A549 (cell line): ENCODE measurements at regions of chr11 and their contacts with region 1.

Region 1: DNA sequence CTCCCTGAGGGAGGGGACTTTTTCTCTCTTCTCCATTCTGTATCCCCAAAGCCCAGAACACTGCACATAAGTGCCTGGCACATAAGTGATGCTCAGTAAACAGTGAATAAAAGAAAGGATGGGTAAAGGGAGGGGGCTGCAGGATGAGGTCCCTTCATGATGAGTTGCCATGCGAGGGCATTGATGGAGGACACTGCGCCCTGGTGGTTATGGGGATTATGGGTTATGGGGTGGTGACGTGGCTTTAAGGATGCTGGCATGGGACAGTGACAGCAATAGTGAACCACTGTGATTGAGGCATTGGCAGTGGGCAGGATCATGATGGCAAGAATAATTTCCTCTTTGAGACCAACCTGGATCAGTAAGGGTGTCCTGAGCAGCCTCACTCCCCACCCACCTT is 44.0 kb upstream of the LRRC32 start:
- DNase-seq: no peak
- ATAC-seq: peak in 1 of 2 experiments; percentile 46; a peak in 3 of 6 replicates
- H3K4me3 ChIP-seq: no peak overlapping the region
- H3K27ac ChIP-seq: no peak overlapping the region
- H3K4me1 ChIP-seq: no peaks in the 10 kb centered on the region
- CTCF ChIP-seq: no peak
- EP300 ChIP-seq: no peak
- POLR2A ChIP-seq: no peak
- RAD21 ChIP-seq: no peak

Region 2: GRCh38 chr11:76690736-76691135 is 23.8 kb before region 1 on chr11:
- CTCF ChIA-PET with region 1: no interaction called
- POLR2A ChIA-PET with region 1: no interaction called
- DNase-seq: no peak
- ATAC-seq: no peak
- H3K4me3 ChIP-seq: no peak overlapping the region
- H3K27ac ChIP-seq: no peak overlapping the region
- H3K4me1 ChIP-seq: peaks cover 14% of the 10 kb centered on the region; the same call in 2 of the 3 replicates
- CTCF ChIP-seq: no peak
- EP300 ChIP-seq: no peak
- POLR2A ChIP-seq: no peak
- RAD21 ChIP-seq: no peak

Region 3: GRCh38 chr11:76701122-76702040 is 13.1 kb before region 1 on chr11:
- CTCF ChIA-PET with region 1: interaction called, 12 read pairs
- POLR2A ChIA-PET with region 1: no interaction called
- DNase-seq: no peak
- ATAC-seq: peak in 1 of 2 experiments; percentile 51; a peak in 3 of 6 replicates
- H3K4me3 ChIP-seq: no peak overlapping the region
- H3K27ac ChIP-seq: peak overlapping the region; percentile 76 to 89
- H3K4me1 ChIP-seq: peaks cover 36% of the 10 kb centered on the region
- CTCF ChIP-seq: no peak
- EP300 ChIP-seq: no peak
- POLR2A ChIP-seq: no peak
- RAD21 ChIP-seq: no peak